HepG2 (cell line): ENCODE measurements at regions of chr7 and their contacts with region 1.

Region 1: GRCh38 chr7:2523941-2524807 is 4.6 kb downstream of the LFNG start:
- DNase-seq: peak; percentile 62
- ATAC-seq: peak; percentile 40
- H3K4me3 ChIP-seq: peak overlapping the region in 2 of 3 experiments; percentile 29 to 66; a peak in 1 of 6 replicates
- H3K27ac ChIP-seq: no peak overlapping the region
- H3K4me1 ChIP-seq: peaks cover 67% of the 10 kb centered on the region
- H3K27me3 ChIP-seq: peaks cover 1 to 34% of the 10 kb centered on the region in 2 experiments
- CTCF ChIP-seq: no peak
- EP300 ChIP-seq: no peak
- POLR2A ChIP-seq: no peak
- RAD21 ChIP-seq: no peak

Region 2: GRCh38 chr7:2465928-2466327 is 58.2 kb before region 1 on chr7:
- CTCF ChIA-PET with region 1: no interaction called
- POLR2A ChIA-PET with region 1: no interaction called
- in situ Hi-C with region 1: no loop called
- intact Hi-C with region 1: no loop called
- DNase-seq: no peak
- ATAC-seq: no peak
- H3K4me3 ChIP-seq: no peak overlapping the region
- H3K27ac ChIP-seq: no peak overlapping the region
- H3K4me1 ChIP-seq: peaks cover 20% of the 10 kb centered on the region
- H3K27me3 ChIP-seq: peaks cover 5 to 11% of the 10 kb centered on the region in 2 experiments; a peak in 4 of 5 replicates
- CTCF ChIP-seq: no peak
- EP300 ChIP-seq: no peak
- POLR2A ChIP-seq: no peak
- RAD21 ChIP-seq: no peak

Region 3: GRCh38 chr7:2477447-2478398 is 46.5 kb before region 1 on chr7:
- CTCF ChIA-PET with region 1: no interaction called
- POLR2A ChIA-PET with region 1: no interaction called
- in situ Hi-C with region 1: no loop called
- intact Hi-C with region 1: loop called (anchors 5 kb)
- DNase-seq: peak; percentile 34
- ATAC-seq: peak; percentile 92
- H3K4me3 ChIP-seq: no peak overlapping the region; a peak in 1 of 6 replicates
- H3K27ac ChIP-seq: no peak overlapping the region
- H3K4me1 ChIP-seq: peaks cover 38% of the 10 kb centered on the region
- H3K27me3 ChIP-seq: peaks cover 16 to 63% of the 10 kb centered on the region in 2 experiments
- CTCF ChIP-seq: peak; percentile 96
- EP300 ChIP-seq: no peak
- POLR2A ChIP-seq: no peak
- RAD21 ChIP-seq: peak; percentile 84

Region 4: DNA sequence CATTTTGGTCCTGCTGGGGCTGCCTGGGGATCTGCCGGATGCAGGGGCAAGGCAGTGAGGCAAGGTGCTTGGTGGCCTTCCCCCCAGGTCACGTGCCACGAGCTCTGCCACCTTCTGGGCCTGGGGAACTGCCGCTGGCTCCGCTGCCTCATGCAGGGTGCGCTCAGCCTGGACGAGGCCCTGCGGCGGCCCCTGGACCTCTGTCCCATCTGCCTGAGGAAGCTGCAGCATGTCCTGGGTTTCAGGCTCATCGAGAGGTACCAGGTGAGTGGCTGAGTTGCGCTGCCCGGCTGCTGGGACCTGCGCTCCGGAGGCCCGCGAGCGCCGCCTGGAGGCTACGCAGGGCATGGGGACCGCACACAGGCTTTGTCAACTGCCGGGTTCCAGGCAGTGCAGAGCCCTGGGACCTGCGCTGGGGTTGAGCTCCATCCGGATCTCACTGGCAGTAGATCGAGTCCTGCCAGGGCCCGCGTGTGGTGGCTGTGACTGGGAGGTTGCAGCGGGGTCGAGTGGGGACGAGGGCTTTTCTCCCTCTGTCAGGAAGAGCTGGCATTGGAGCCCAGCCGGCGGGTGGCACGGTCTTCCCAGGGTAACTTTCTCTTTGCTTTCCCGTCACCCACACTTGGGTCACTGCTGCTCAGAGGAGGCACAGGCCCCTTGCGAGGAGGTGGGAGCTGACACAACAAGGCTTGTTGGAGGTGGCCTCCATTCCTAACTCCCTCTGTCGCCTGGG is 185.5 kb after region 1 on chr7:
- CTCF ChIA-PET with region 1: no interaction called
- POLR2A ChIA-PET with region 1: no interaction called
- in situ Hi-C with region 1: no loop called
- intact Hi-C with region 1: no loop called
- DNase-seq: peak; percentile 60
- ATAC-seq: peak; percentile 89
- H3K4me3 ChIP-seq: peak overlapping the region in 2 of 3 experiments; percentile 17 to 60; a peak in 4 of 6 replicates
- H3K27ac ChIP-seq: no peak overlapping the region
- H3K4me1 ChIP-seq: peaks cover 28% of the 10 kb centered on the region
- H3K27me3 ChIP-seq: peaks cover 0 to 18% of the 10 kb centered on the region in 2 experiments; a peak in 3 of 5 replicates
- CTCF ChIP-seq: peak; percentile 99
- EP300 ChIP-seq: no peak
- POLR2A ChIP-seq: no peak
- RAD21 ChIP-seq: peak; percentile 95